ENCODE measurements at regions of chr4 and their contacts with region 1.

Region 1: GRCh38 chr4:145061318-145061920 is 36.6 kb downstream of the ANAPC10 start:
- DNase-seq: peak; percentile 35
- H3K4me3 ChIP-seq: no peak overlapping the region
- H3K27ac ChIP-seq: no peak overlapping the region
- H3K4me1 ChIP-seq: peaks cover 6% of the 10 kb centered on the region
- H3K27me3 ChIP-seq: no peaks in the 10 kb centered on the region
- CTCF ChIP-seq: peak; percentile 32 to 42

Region 2: GRCh38 chr4:144355809-144356757 is 705.3 kb before region 1 on chr4:
- CTCF ChIA-PET with region 1: no interaction called
- dilution Hi-C with region 1: no loop called
- in situ Hi-C with region 1: no loop called
- intact Hi-C with region 1: loop called (anchors 10 kb)
- DNase-seq: peak; percentile 86
- H3K4me3 ChIP-seq: no peak overlapping the region
- H3K27ac ChIP-seq: no peak overlapping the region
- H3K4me1 ChIP-seq: peaks cover 30% of the 10 kb centered on the region
- H3K27me3 ChIP-seq: no peaks in the 10 kb centered on the region
- CTCF ChIP-seq: peak; percentile 27 to 46

Region 3: GRCh38 chr4:144611846-144612245 is 449.6 kb before region 1 on chr4:
- CTCF ChIA-PET with region 1: no interaction called
- dilution Hi-C with region 1: no loop called
- in situ Hi-C with region 1: no loop called
- intact Hi-C with region 1: loop called (anchors 10 kb)
- DNase-seq: peak; percentile 22
- H3K4me3 ChIP-seq: no peak overlapping the region
- H3K27ac ChIP-seq: no peak overlapping the region
- H3K4me1 ChIP-seq: no peaks in the 10 kb centered on the region
- H3K27me3 ChIP-seq: no peaks in the 10 kb centered on the region
- CTCF ChIP-seq: peak; percentile 62 to 78

Region 4: GRCh38 chr4:144787365-144788258 is 273.8 kb before region 1 on chr4:
- CTCF ChIA-PET with region 1: no interaction called
- dilution Hi-C with region 1: no loop called
- in situ Hi-C with region 1: loop called in 1 of 2 experiments (anchors 25 kb)
- intact Hi-C with region 1: no loop called
- DNase-seq: peak; percentile 27
- H3K4me3 ChIP-seq: no peak overlapping the region
- H3K27ac ChIP-seq: no peak overlapping the region
- H3K4me1 ChIP-seq: no peaks in the 10 kb centered on the region
- H3K27me3 ChIP-seq: no peaks in the 10 kb centered on the region
- CTCF ChIP-seq: peak; percentile 58 to 66

Region 5: GRCh38 chr4:145285928-145286327 is 224.5 kb after region 1 on chr4:
- CTCF ChIA-PET with region 1: no interaction called
- dilution Hi-C with region 1: no loop called
- in situ Hi-C with region 1: no loop called
- intact Hi-C with region 1: no loop called
- DNase-seq: peak; percentile 35
- H3K4me3 ChIP-seq: no peak overlapping the region
- H3K27ac ChIP-seq: no peak overlapping the region
- H3K4me1 ChIP-seq: no peaks in the 10 kb centered on the region
- H3K27me3 ChIP-seq: no peaks in the 10 kb centered on the region
- CTCF ChIP-seq: no peak

Region 6: DNA sequence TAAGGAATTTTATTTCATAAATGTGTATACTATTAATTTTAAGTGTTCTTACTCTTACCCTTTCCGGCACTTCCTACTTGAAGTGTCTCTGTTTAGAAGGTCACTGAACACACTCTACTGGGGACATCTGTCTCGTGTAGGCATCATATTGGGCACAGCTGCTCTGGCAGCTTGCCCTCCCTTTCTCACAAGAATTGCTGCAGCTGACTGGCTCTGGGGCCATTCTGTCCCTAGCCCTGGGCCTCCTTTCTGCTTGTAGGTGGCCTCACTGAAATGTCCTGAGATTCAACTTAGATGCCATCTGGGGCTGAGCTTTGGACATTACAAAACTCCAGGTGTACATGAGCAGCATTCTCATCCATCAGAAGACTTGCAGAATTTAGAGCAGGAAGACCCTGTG is 469.8 kb after region 1 on chr4:
- CTCF ChIA-PET with region 1: no interaction called
- dilution Hi-C with region 1: no loop called
- in situ Hi-C with region 1: no loop called
- intact Hi-C with region 1: no loop called
- DNase-seq: no peak
- H3K4me3 ChIP-seq: no peak overlapping the region
- H3K27ac ChIP-seq: no peak overlapping the region
- H3K4me1 ChIP-seq: peaks cover 9% of the 10 kb centered on the region
- H3K27me3 ChIP-seq: no peaks in the 10 kb centered on the region
- CTCF ChIP-seq: no peak

Measured in mammary epithelial cell (primary cell).